ENCODE measurements at regions of chr10 and their contacts with region 1.

Region 1: DNA sequence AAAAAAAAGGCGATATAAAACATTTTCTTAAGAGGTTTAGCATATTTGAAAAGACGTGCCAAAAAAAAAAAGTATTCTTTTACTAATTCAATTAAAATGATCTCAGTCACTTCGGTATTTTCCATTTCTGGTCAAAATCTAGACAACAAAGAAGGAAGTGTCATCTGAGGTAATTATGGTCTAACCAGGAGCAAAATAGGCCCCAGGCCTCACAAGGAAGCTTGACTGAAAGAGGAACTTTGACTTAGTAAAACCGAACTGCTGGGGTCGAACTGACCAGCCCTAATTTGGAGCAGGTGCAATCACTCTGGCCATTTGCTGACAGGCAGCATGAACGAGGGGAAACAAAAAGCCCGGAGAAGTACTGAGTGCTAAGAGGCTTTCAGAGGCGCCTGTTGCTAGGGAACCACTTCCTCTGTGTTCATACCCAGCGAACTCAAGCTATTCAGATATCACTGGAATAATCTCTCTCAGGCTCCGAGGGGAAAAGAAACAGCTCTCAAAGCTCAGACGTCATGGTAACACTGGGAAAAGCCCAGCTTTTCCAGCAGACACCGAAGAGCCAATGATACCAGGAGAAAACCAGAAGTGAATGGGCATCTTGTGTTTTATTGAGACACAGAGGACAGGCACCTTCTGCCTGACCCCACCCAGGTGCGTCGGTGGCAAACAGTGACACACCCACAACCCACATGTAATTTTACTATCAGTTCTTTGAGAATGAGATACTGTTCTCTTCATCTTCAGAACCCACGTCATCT is 126.5 kb downstream of the FAM107B start:
- DNase-seq: peak; percentile 73
- H3K4me3 Mint-ChIP-seq: peak overlapping the region; percentile 63
- H3K27ac Mint-ChIP-seq: peak overlapping the region; percentile 96
- H3K4me1 Mint-ChIP-seq: peaks cover 68% of the 10 kb centered on the region
- H3K27me3 Mint-ChIP-seq: no peaks in the 10 kb centered on the region

Region 2: GRCh38 chr10:14389978-14390590 is 258.1 kb before region 1 on chr10:
- intact Hi-C with region 1: loop called (anchors 1 kb)
- DNase-seq: peak; percentile 14
- H3K4me3 Mint-ChIP-seq: no peak overlapping the region
- H3K27ac Mint-ChIP-seq: no peak overlapping the region
- H3K4me1 Mint-ChIP-seq: peaks cover 24% of the 10 kb centered on the region
- H3K27me3 Mint-ChIP-seq: peaks cover 41% of the 10 kb centered on the region

Region 3: GRCh38 chr10:14560274-14560673 is 87.9 kb before region 1 on chr10:
- intact Hi-C with region 1: loop called (anchors 1 kb)
- DNase-seq: peak; percentile 52
- H3K4me3 Mint-ChIP-seq: peak overlapping the region; percentile 38
- H3K27ac Mint-ChIP-seq: peak overlapping the region; percentile 84
- H3K4me1 Mint-ChIP-seq: peaks cover 83% of the 10 kb centered on the region
- H3K27me3 Mint-ChIP-seq: no peaks in the 10 kb centered on the region

Region 4: DNA sequence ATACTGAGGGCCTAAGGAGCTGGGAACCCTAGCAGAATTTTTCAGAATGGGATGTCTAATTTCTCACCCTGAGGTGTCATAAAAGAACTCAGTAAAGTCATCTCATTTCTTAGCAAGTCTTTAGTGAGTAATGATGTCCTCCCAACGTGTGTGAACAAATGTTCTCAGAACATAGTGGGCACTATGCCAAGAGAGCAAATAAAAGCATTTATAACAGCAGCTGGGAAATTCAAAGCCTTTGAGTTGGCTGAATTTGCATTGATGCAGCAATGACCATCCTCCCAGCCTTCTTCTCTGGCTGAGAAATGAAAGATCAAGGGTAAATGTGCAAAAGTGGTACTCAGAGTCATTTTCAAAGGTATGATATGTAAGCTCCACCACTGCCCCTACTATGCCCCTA is 17.1 kb after region 1 on chr10:
- intact Hi-C with region 1: no loop called
- DNase-seq: no peak
- H3K4me3 Mint-ChIP-seq: no peak overlapping the region
- H3K27ac Mint-ChIP-seq: no peak overlapping the region
- H3K4me1 Mint-ChIP-seq: peaks cover 35% of the 10 kb centered on the region
- H3K27me3 Mint-ChIP-seq: no peaks in the 10 kb centered on the region

Region 5: DNA sequence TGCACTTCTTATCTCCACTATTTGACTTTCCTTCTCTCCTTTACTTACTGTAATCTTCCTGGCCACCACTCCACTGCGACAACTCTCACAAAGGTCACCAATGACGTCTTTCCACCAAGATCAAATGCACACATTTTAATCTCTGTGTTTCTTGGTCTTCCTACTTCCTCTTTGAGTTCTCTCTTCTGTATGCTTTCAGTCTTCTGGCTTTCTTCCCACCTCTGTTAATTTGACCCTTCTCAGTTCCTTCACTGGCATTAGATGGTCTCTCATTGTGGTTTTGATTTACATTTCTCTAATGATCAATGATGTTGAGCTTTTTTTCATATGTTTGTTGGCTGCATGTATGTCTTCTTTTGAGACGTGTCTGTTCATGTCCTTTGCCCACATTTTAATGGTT is 94.6 kb after region 1 on chr10:
- intact Hi-C with region 1: loop called (anchors 2 kb)
- DNase-seq: no peak
- H3K4me3 Mint-ChIP-seq: peak overlapping the region; percentile 3
- H3K27ac Mint-ChIP-seq: peak overlapping the region; percentile 76
- H3K4me1 Mint-ChIP-seq: peaks cover 33% of the 10 kb centered on the region
- H3K27me3 Mint-ChIP-seq: no peaks in the 10 kb centered on the region

Region 6: DNA sequence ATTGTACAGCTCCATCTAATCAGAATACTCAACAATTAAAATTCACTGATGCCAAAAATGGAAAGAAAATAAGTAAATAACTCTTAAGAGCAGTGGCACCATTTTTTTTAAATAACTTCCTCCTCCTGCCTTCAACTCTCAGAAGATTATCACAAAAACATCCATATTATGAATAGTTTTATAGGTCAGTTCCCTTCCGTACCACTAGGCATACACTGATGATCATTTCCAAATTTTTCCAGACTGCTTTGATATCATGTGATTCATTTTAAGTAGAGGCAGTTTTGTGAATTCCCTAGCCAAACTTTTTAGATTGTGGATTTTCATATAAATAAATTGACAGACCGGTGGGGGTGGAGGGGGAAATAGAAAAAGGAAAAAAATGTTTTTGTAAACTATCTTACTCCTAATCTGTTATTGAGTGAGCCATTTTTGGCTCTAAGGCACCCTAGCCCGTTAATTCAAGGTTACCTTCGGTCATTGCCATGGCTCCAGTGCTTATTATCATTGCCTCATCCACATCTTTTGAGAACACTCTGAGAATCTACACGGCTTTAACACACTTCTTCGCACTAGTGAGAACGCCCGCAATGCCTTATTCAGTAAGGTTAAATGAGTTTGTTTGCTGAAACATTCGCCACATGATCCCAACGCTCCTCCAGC is 125.5 kb after region 1 on chr10:
- intact Hi-C with region 1: no loop called
- DNase-seq: no peak
- H3K4me3 Mint-ChIP-seq: no peak overlapping the region
- H3K27ac Mint-ChIP-seq: no peak overlapping the region
- H3K4me1 Mint-ChIP-seq: peaks cover 5% of the 10 kb centered on the region
- H3K27me3 Mint-ChIP-seq: peaks cover 6% of the 10 kb centered on the region

Region 7: DNA sequence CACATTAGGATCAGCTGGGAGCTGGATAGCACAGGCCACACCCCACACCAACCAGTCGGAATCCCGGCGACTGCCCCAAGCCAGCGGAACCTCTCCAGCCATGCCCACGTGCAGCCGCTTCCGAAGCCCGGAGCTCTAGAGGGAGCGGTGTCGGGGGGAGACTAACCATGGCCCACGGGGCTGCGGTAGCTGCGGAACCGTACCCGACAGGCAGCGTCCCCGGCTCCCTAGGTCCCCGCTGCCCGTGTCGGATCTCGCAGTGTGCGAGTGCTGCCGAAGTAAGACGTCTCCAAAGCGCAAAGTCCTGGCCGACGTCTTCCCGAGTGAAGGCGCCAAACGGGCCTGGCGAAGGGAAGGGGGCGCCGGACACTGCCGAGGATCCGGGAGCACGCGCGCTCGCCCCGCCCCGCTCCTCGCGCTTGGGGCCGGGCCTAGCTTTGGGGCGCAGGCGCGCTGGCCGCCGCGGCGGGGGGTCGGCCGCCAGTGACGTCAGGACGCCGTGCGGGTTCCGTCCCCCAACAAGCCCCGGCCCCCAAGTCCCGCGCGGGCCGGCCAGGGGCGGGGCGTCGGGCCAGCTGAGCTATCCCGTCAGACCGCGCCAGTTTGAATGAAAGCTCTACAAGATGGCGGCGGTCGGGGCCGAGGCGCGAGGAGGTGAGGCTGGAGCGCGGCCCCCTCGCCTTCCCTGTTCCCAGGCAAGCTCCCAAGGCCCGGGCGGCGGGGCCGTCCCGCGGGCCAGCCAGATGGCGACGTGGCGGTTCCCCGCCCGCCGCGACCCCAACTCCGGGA is 230.3 kb after region 1 on chr10 and contains the start of gene SUV39H2:
- intact Hi-C with region 1: loop called (anchors 5 kb)
- DNase-seq: peak; percentile 93
- H3K4me3 Mint-ChIP-seq: peak within 1 kb of the TSS; percentile 94
- H3K27ac Mint-ChIP-seq: peak within 1 kb of the TSS; percentile 88
- H3K4me1 Mint-ChIP-seq: peaks cover 34% of the 10 kb centered on the region
- H3K27me3 Mint-ChIP-seq: no peaks in the 10 kb centered on the region
- total RNA-seq, gene SUV39H2: 44.0 and 45.0 TPM in 2 replicates